B cell (primary cell): ENCODE measurements at regions of chr6 and their contacts with region 1.

Region 1: GRCh38 chr6:7051233-7052114 is 56.3 kb upstream of the RREB1 start:
- DNase-seq: peak; percentile 74
- ATAC-seq: peak; percentile 78
- H3K4me3 ChIP-seq: peak overlapping the region; percentile 16 to 69 (median 58)
- H3K4me3 Mint-ChIP-seq: peak overlapping the region; percentile 86
- H3K27ac ChIP-seq: peak overlapping the region in 1 of 2 donors; percentile 23
- H3K27ac Mint-ChIP-seq: peak overlapping the region; percentile 71
- H3K4me1 ChIP-seq: peaks cover 14 to 16% of the 10 kb centered on the region in 2 donors
- H3K4me1 Mint-ChIP-seq: peaks cover 14% of the 10 kb centered on the region
- H3K27me3 ChIP-seq: no peaks in the 10 kb centered on the region
- H3K27me3 Mint-ChIP-seq: no peaks in the 10 kb centered on the region
- CTCF ChIP-seq: no peak

Region 2: GRCh38 chr6:6610031-6610591 is 441.4 kb before region 1 on chr6:
- CTCF ChIA-PET with region 1: no interaction called
- POLR2A ChIA-PET with region 1: no interaction called
- intact Hi-C with region 1: loop called (anchors 5 kb)
- DNase-seq: peak; percentile 84
- ATAC-seq: peak; percentile 95
- H3K4me3 ChIP-seq: peak overlapping the region in 3 of 5 experiments; percentile 1 to 20 (median 13)
- H3K4me3 Mint-ChIP-seq: peak overlapping the region; percentile 76
- H3K27ac ChIP-seq: peak overlapping the region; percentile 77 to 91
- H3K27ac Mint-ChIP-seq: peak overlapping the region; percentile 95
- H3K4me1 ChIP-seq: peaks cover 52 to 57% of the 10 kb centered on the region in 2 donors
- H3K4me1 Mint-ChIP-seq: peaks cover 80% of the 10 kb centered on the region
- H3K27me3 ChIP-seq: no peaks in the 10 kb centered on the region
- H3K27me3 Mint-ChIP-seq: no peaks in the 10 kb centered on the region
- CTCF ChIP-seq: no peak

Region 3: GRCh38 chr6:7086488-7086887 is 35.0 kb after region 1 on chr6:
- CTCF ChIA-PET with region 1: interaction called, 5 read pairs
- POLR2A ChIA-PET with region 1: no interaction called
- intact Hi-C with region 1: loop called (anchors 5 kb)
- DNase-seq: peak; percentile 74
- ATAC-seq: peak; percentile 79
- H3K4me3 ChIP-seq: peak overlapping the region; percentile 30 to 89 (median 47)
- H3K4me3 Mint-ChIP-seq: peak overlapping the region; percentile 86
- H3K27ac ChIP-seq: peak overlapping the region; percentile 50 to 73
- H3K27ac Mint-ChIP-seq: peak overlapping the region; percentile 88
- H3K4me1 ChIP-seq: peaks cover 23 to 24% of the 10 kb centered on the region in 2 donors
- H3K4me1 Mint-ChIP-seq: peaks cover 27% of the 10 kb centered on the region
- H3K27me3 ChIP-seq: no peaks in the 10 kb centered on the region
- H3K27me3 Mint-ChIP-seq: no peaks in the 10 kb centered on the region
- CTCF ChIP-seq: no peak